ENCODE measurements at regions of chr9 and their contacts with region 1.

Region 1: DNA sequence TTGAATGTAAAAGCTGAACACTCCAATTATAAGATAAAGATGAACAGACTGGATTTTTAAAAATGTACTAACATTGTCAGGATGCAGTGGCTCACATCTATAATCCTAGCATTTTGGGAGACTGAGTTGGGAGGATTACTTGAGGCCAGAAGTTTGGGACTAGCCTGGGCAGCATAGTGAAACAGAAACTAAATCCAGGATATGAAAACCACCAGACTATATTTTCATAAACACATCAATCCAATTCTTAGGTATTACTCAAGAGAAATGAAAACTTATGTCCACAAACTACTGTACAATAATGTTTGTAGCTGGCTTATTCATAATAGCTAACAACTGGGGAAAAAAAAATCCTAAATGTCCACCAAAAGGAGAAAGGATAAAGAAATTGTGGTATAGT is 26.8 kb upstream of the NAA35 start:
- DNase-seq: peak in 1 of 35 experiments; percentile 6
- ATAC-seq: no peak
- H3K4me3 ChIP-seq: no peak overlapping the region
- H3K4me3 Mint-ChIP-seq: peak overlapping the region in 1 of 3 donors; percentile 13
- H3K27ac ChIP-seq: no peak overlapping the region
- H3K27ac Mint-ChIP-seq: peak overlapping the region; percentile 53 to 82
- H3K4me1 ChIP-seq: no peaks in the 10 kb centered on the region
- H3K4me1 Mint-ChIP-seq: peaks cover 12 to 14% (median 13%) of the 10 kb centered on the region in 3 donors
- H3K27me3 ChIP-seq: no peaks in the 10 kb centered on the region
- H3K27me3 Mint-ChIP-seq: peaks cover 2 to 3% of the 10 kb centered on the region in 2 donors

Region 2: GRCh38 chr9:85688361-85688760 is 225.7 kb before region 1 on chr9:
- CTCF ChIA-PET with region 1: interaction called in 1 of 2 experiments, 11 read pairs
- POLR2A ChIA-PET with region 1: no interaction called
- DNase-seq: no peak
- ATAC-seq: no peak
- H3K4me3 ChIP-seq: no peak overlapping the region
- H3K4me3 Mint-ChIP-seq: no peak overlapping the region
- H3K27ac ChIP-seq: no peak overlapping the region
- H3K27ac Mint-ChIP-seq: no peak overlapping the region
- H3K4me1 ChIP-seq: no peaks in the 10 kb centered on the region
- H3K4me1 Mint-ChIP-seq: peaks cover 13 to 16% (median 16%) of the 10 kb centered on the region in 3 donors
- H3K27me3 ChIP-seq: no peaks in the 10 kb centered on the region
- H3K27me3 Mint-ChIP-seq: no peaks in the 10 kb centered on the region

Region 3: GRCh38 chr9:85898332-85898731 is 15.8 kb before region 1 on chr9:
- CTCF ChIA-PET with region 1: no interaction called
- POLR2A ChIA-PET with region 1: no interaction called
- DNase-seq: no peak
- ATAC-seq: no peak
- H3K4me3 ChIP-seq: no peak overlapping the region
- H3K4me3 Mint-ChIP-seq: no peak overlapping the region
- H3K27ac ChIP-seq: no peak overlapping the region
- H3K27ac Mint-ChIP-seq: no peak overlapping the region
- H3K4me1 ChIP-seq: no peaks in the 10 kb centered on the region
- H3K4me1 Mint-ChIP-seq: peaks cover 3 to 6% (median 4%) of the 10 kb centered on the region in 3 donors
- H3K27me3 ChIP-seq: no peaks in the 10 kb centered on the region
- H3K27me3 Mint-ChIP-seq: no peaks in the 10 kb centered on the region